ENCODE measurements at regions of chr12 and their contacts with region 1.

Region 1: DNA sequence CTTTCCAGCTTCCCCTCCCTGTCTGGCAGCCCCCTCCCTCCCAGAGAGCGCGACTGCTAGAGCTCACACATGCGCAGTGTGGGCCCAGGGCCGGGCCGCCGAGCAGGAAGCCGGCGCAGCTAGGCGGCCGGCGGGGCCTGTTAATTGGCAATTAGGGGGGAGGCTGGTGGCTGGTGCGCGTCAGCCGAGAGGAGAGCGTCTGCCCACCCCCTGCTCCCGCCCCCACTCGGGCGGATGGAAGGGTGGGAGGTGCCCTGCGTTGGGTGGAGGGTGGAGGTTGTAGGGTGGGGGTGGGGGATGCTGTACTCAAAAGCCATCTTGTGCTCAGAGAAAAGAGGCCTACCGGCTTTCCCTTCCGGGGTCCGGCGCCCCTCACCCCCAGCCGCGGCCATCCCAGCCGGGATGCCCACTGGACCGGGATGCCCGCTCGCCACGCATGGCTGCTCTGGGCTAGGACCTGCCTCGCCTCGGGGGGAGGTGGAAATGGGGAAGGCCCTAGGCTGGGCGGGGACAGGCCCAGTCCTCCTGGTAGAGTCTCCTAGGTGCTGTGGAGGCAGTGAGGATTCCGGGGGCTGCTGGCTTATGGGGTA is 9.2 kb downstream of the HOXC8 start:
- DNase-seq: no peak
- H3K4me3 ChIP-seq: peak overlapping the region; percentile 48 to 62 (median 53)
- H3K27ac ChIP-seq: peak overlapping the region in 3 of 4 donors; percentile 22 to 61 (median 36)
- H3K4me1 ChIP-seq: peaks cover 22 to 57% (median 44%) of the 10 kb centered on the region in 4 donors
- H3K27me3 ChIP-seq: peaks cover 0 to 100% (median 56%) of the 10 kb centered on the region in 4 donors
- CTCF ChIP-seq: no peak
- EP300 ChIP-seq: no peak
- POLR2A ChIP-seq: no peak

Region 2: DNA sequence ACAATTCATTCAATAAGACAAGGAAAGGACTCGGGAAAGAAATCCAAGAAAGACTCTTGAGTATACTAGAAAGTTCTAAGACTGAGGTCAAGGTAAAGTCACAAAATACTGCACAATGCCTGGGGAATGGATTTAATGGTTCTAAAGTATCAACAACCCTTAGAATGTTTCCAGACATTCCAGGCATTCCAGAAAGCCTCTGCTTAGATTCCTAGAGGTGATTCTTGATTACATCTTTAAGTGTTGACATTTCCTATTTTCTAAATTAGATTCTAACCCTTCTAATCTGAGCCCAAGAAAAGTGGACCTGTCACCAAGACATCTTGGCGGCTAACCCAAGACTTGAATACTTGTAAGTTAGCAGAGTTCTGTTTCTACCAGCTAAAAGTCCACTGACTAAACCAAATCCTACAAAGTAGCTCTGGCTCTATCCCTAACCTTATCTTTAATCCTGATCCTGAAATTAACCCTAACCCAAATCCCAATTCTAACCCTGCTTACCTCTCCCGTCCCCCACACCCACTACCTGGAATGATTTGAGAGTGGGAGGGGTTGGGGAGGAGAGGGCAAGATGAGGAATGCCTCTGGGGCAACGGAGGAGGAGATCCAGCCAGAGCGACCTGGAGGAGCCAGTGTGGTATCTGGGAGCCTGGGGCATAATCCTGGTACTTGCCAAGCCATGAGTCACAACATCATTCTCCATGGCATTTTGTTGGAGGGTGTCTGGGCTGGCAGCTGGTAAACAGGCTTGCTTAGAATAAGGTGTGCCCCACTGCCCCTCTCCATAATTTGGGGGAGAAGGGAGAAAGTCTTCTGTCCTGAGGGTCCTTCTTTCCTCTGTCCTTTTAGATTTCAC is 172.8 kb before region 1 on chr12:
- intact Hi-C with region 1: no loop called
- DNase-seq: no peak
- H3K4me3 ChIP-seq: no peak overlapping the region
- H3K27ac ChIP-seq: no peak overlapping the region
- H3K4me1 ChIP-seq: peaks cover 0 to 4% (median 0%) of the 10 kb centered on the region in 4 donors
- H3K27me3 ChIP-seq: peaks cover 0 to 58% (median 2%) of the 10 kb centered on the region in 4 donors
- CTCF ChIP-seq: no peak
- EP300 ChIP-seq: no peak
- POLR2A ChIP-seq: no peak

Region 3: GRCh38 chr12:54368709-54369583 is 351.0 kb after region 1 on chr12:
- intact Hi-C with region 1: loop called (anchors 10 kb)
- DNase-seq: peak; percentile 97
- H3K4me3 ChIP-seq: peak overlapping the region; percentile 47 to 62 (median 50)
- H3K27ac ChIP-seq: peak overlapping the region; percentile 73 to 86 (median 78)
- H3K4me1 ChIP-seq: peaks cover 39 to 59% (median 57%) of the 10 kb centered on the region in 4 donors
- H3K27me3 ChIP-seq: no peaks in the 10 kb centered on the region
- CTCF ChIP-seq: peak; percentile 80 to 90 (median 83)
- EP300 ChIP-seq: no peak
- POLR2A ChIP-seq: no peak